Mucosa of descending colon (tissue), 3 donors: ENCODE measurements at regions of chr4 and their contacts with region 1.

Region 1: GRCh38 chr4:2220016-2220630 is 21.8 kb downstream of the HAUS3 start:
- DNase-seq: peak in 2 of 3 donors; percentile 81 to 90
- ATAC-seq: peak; percentile 95
- H3K4me3 ChIP-seq: no peak overlapping the region
- H3K4me1 ChIP-seq: no peaks in the 10 kb centered on the region
- CTCF ChIP-seq: peak; percentile 78

Region 2: GRCh38 chr4:2290974-2291704 is 71.0 kb after region 1 on chr4:
- intact Hi-C with region 1: no loop called
- DNase-seq: peak; percentile 29 to 67 (median 51)
- ATAC-seq: peak; percentile 67
- H3K4me3 ChIP-seq: no peak overlapping the region
- H3K4me1 ChIP-seq: no peaks in the 10 kb centered on the region
- CTCF ChIP-seq: no peak

Region 3: DNA sequence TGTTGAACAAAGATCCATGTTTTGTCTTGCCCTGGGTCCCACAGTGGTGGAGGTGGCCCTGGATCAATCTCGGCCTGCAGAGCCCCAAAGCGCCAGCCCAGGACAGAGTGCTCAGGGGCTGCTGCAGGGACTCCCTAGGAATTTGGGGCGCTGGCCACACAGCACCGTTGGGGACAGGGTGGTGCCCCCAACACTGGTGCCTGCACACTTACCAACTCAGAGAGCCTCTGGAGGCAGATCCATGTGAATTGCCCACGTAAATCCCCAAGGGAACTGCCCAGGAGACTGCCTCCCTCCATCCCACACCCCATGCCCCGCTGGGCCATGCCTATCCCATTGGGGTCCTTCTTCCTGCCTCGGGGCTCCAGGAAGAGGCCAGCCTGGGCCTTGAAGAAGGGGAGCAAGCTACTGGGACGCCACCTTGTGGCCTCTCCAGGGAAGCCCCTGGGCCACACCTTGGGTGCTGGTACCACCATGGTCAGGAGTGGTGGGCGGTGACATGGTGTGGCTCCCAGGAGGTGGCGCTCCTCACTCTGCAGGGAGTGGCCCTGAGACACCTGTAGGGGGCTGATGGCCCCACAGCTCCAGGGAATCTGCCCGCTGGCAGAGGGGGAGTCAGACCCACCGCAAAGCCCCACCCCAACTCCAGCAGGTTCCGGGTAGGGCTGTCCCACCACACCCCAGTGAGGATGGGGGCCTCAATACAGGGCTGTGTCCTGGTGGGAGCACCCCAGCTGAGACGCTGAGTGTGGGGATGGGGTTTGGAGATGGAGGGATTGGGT is 221.5 kb after region 1 on chr4:
- intact Hi-C with region 1: loop called in 1 of 2 experiments (anchors 5 kb)
- DNase-seq: peak; percentile 63 to 78 (median 78)
- ATAC-seq: peak; percentile 91
- H3K4me3 ChIP-seq: no peak overlapping the region
- H3K4me1 ChIP-seq: no peaks in the 10 kb centered on the region
- CTCF ChIP-seq: peak; percentile 68

Region 4: GRCh38 chr4:2458546-2459491 is 238.7 kb after region 1 on chr4:
- intact Hi-C with region 1: loop called in 1 of 2 experiments (anchors 10 kb)
- DNase-seq: peak in 1 of 3 donors; percentile 49
- ATAC-seq: no peak
- H3K4me3 ChIP-seq: no peak overlapping the region
- H3K4me1 ChIP-seq: peaks cover 10% of the 10 kb centered on the region
- CTCF ChIP-seq: no peak